ENCODE measurements at regions of chr11 and their contacts with region 1.

Region 1: GRCh38 chr11:73393479-73394380 is 17.5 kb downstream of the RELT start:
- DNase-seq: peak; percentile 53
- H3K4me3 ChIP-seq: no peak overlapping the region
- H3K27ac ChIP-seq: no peak overlapping the region
- H3K4me1 ChIP-seq: peaks cover 4% of the 10 kb centered on the region
- H3K27me3 ChIP-seq: no peaks in the 10 kb centered on the region
- CTCF ChIP-seq: peak; percentile 74 to 81

Region 2: GRCh38 chr11:73295231-73295995 is 98.3 kb before region 1 on chr11:
- CTCF ChIA-PET with region 1: no interaction called
- dilution Hi-C with region 1: no loop called
- in situ Hi-C with region 1: no loop called
- intact Hi-C with region 1: loop called (anchors 1 kb)
- DNase-seq: peak; percentile 70
- H3K4me3 ChIP-seq: no peak overlapping the region
- H3K27ac ChIP-seq: no peak overlapping the region
- H3K4me1 ChIP-seq: no peaks in the 10 kb centered on the region
- H3K27me3 ChIP-seq: no peaks in the 10 kb centered on the region
- CTCF ChIP-seq: peak; percentile 97 to 99

Region 3: DNA sequence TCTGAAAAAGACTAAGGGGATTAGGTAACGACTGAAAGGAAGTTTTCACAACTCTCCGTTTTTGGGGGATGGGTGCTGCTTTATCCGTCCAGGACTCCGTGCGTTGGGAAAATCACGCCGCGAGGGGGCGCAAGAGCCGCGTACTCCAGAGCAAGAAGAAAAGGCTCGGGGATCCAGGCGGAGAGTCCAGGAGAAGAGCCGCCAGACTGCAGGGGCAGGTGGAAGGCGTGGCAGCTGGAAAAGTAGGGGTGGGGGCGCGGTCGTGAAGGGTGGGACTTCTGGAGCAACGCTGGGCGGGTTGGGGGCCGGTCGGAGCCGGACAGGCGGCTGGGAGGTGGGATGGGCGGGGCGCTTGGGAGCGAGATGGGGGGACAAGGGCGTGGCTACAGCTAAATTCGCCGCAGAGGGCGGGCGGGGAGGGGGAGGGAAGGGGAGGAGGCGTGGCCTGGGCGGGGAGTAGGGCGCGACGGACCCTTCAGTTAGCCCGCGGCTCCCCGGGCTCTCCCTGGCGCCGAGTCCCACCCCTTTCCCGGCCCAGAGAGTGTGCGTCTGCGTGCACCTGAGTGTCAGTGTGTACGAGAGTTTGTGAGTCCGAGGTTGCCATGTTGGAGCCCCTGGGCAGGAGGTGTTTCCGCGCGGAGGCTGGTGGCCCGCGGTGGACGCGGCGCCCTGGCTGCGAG is 86.3 kb before region 1 on chr11:
- CTCF ChIA-PET with region 1: interaction called, 5 read pairs
- dilution Hi-C with region 1: no loop called
- in situ Hi-C with region 1: no loop called
- intact Hi-C with region 1: loop called (anchors 1 kb)
- DNase-seq: peak; percentile 94
- H3K4me3 ChIP-seq: peak overlapping the region; percentile 54 to 65 (median 57)
- H3K27ac ChIP-seq: peak overlapping the region; percentile 45
- H3K4me1 ChIP-seq: peaks cover 43% of the 10 kb centered on the region
- H3K27me3 ChIP-seq: no peaks in the 10 kb centered on the region
- CTCF ChIP-seq: peak; percentile 69 to 91

Region 4: DNA sequence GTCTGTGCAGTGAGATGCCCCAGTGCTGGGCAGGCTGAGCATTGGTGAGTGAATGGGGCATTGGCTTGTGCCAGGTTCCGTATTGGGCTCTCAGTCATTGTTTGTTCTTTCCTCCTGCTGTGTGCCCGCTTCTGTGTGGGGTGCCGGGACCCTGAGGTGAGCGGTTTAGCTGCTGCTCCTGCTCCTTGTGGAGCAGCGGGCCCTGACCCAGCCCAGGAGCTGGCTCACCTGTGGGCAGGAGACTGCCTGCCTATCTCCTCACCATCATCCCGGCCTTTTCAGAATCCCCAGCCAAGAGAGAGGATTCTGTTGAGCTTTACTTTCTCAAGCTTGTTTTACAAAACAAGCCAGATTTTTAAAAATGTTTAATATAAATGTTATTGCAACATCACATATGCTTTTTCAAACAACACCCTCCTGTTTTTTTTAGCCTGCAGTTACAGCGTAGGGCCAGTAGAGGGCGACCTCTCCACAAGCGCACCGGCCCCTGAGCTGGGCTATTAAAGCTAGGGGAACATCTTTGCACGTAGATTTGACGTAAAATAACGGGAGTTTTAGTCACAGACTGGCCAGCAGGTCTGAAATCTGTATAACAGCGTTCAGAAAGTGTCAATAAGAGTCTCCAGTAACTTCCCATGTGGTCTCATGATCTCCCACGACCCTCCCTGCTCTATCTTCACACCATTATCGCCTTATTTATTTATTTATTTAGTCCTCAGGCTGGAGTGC is 42.7 kb before region 1 on chr11:
- CTCF ChIA-PET with region 1: interaction called, 22 read pairs
- dilution Hi-C with region 1: no loop called
- in situ Hi-C with region 1: no loop called
- intact Hi-C with region 1: loop called (anchors 1 kb)
- DNase-seq: peak; percentile 55
- H3K4me3 ChIP-seq: no peak overlapping the region
- H3K27ac ChIP-seq: no peak overlapping the region
- H3K4me1 ChIP-seq: peaks cover 7% of the 10 kb centered on the region
- H3K27me3 ChIP-seq: no peaks in the 10 kb centered on the region
- CTCF ChIP-seq: peak; percentile 97 to 99

Region 5: DNA sequence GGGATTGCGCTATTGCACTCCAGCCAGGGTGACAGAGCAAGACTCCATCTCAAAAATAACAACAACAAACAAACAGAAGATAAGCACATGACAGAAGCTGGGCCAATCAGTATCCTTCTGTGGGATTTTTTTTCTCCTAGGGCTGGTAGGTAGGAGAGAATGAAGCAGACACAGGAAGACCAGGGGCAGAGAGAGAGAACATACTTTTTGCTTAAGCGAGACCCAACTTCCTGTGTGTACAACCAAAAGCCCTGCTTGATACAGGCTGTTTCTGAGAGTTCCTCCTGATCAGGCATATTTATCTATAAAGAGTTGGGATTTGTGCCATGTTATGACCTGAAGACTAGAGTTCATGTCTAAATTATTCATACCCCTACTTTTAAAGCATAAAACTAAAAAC is 240.3 kb after region 1 on chr11:
- CTCF ChIA-PET with region 1: no interaction called
- dilution Hi-C with region 1: no loop called
- in situ Hi-C with region 1: no loop called
- intact Hi-C with region 1: no loop called
- DNase-seq: no peak
- H3K4me3 ChIP-seq: no peak overlapping the region
- H3K27ac ChIP-seq: no peak overlapping the region
- H3K4me1 ChIP-seq: no peaks in the 10 kb centered on the region
- H3K27me3 ChIP-seq: no peaks in the 10 kb centered on the region
- CTCF ChIP-seq: no peak

Region 6: DNA sequence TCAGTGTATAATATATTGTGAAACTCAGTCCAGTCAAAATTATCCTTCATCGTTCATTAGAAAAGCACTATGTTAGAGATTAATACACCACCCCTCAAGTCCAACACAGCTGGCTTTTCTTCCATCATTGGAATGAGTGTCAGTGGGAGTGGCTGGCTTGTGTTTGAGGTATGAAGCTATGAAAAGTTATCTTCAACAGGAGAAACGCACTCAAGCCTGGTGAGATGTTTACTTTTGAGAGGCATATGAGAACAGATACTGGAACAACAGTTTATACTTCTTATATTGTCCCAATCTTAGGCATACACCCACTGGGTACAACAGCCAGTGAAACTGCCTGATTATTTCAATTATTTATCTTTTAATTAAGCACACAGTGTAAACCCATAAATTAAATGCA is 287.0 kb after region 1 on chr11:
- CTCF ChIA-PET with region 1: no interaction called
- dilution Hi-C with region 1: no loop called
- in situ Hi-C with region 1: no loop called
- intact Hi-C with region 1: no loop called
- DNase-seq: no peak
- H3K4me3 ChIP-seq: no peak overlapping the region
- H3K27ac ChIP-seq: no peak overlapping the region
- H3K4me1 ChIP-seq: no peaks in the 10 kb centered on the region
- H3K27me3 ChIP-seq: no peaks in the 10 kb centered on the region
- CTCF ChIP-seq: no peak